Right ventricle myocardium superior (tissue), 1 donor: ENCODE measurements at regions of chr5 and their contacts with region 1.

Region 1: GRCh38 chr5:59380350-59380951 is 513.1 kb downstream of the PDE4D start:
- DNase-seq: no peak
- ATAC-seq: peak; percentile 79

Region 2: DNA sequence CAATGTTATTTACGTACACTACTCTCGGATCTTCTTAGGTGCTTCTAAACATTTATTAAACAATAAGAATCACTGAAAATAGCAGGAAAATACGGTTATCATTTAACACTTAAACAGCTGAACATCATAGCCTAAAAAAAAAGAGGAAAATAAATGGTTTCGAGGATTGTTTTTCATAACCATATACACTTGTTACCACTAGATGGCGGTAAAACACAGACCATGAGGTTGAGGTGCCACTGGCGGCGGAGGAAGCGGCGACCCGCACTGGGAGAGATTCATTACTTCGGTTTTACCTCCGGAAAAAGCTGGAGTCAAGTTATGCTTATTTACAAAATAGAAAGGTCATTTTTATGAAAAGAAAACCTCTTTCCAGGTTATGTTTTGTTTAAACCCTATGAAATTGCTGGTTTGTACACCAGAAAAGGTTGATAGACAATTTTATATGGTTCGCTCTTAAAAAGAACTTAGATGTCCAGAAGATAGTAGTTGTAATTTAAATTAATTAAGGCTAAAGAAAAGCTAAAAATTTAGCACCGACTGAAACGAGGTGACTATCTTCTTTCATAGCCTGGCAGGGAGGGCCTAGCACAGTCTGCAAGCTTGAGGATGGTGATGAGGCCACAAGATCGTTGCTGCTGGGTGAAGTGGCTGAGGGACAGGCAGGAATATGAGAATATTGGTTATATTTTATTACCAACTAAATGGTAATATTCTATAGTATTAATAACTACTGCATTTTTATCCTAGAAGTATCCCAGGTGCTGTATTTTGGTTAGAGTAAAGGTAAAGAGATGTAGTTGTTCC is 191.8 kb before region 1 on chr5:
- intact Hi-C with region 1: loop called (anchors 5 kb)
- DNase-seq: peak; percentile 84
- ATAC-seq: peak; percentile 89

Region 3: GRCh38 chr5:59673438-59674058 is 293.1 kb after region 1 on chr5:
- intact Hi-C with region 1: loop called (anchors 10 kb)
- DNase-seq: no peak
- ATAC-seq: no peak